CD8-positive, alpha-beta memory T cell (primary cell): ENCODE measurements at regions of chr20 and their contacts with region 1.

Region 1: GRCh38 chr20:50070991-50071888 is 41.7 kb downstream of the UBE2V1 start:
- DNase-seq: peak; percentile 80 to 88 (median 85)
- H3K4me3 ChIP-seq: peak overlapping the region; percentile 22
- H3K4me3 Mint-ChIP-seq: peak overlapping the region; percentile 24 to 85 (median 63)
- H3K27ac ChIP-seq: peak overlapping the region; percentile 29
- H3K27ac Mint-ChIP-seq: peak overlapping the region in 1 of 8 donors; percentile 17
- H3K4me1 ChIP-seq: peaks cover 5% of the 10 kb centered on the region
- H3K4me1 Mint-ChIP-seq: peaks cover 2 to 6% (median 6%) of the 10 kb centered on the region in 3 donors
- H3K27me3 ChIP-seq: no peaks in the 10 kb centered on the region
- H3K27me3 Mint-ChIP-seq: peaks cover 5 to 7% of the 10 kb centered on the region in 2 donors

Region 2: GRCh38 chr20:49843770-49844380 is 227.4 kb before region 1 on chr20:
- CTCF ChIA-PET with region 1: no interaction called
- POLR2A ChIA-PET with region 1: no interaction called
- DNase-seq: no peak
- H3K4me3 ChIP-seq: no peak overlapping the region
- H3K4me3 Mint-ChIP-seq: no peak overlapping the region
- H3K27ac ChIP-seq: no peak overlapping the region
- H3K27ac Mint-ChIP-seq: peak overlapping the region in 7 of 8 donors; percentile 6 to 58 (median 32)
- H3K4me1 ChIP-seq: no peaks in the 10 kb centered on the region
- H3K4me1 Mint-ChIP-seq: peaks cover 0 to 6% (median 2%) of the 10 kb centered on the region in 3 donors
- H3K27me3 ChIP-seq: no peaks in the 10 kb centered on the region
- H3K27me3 Mint-ChIP-seq: no peaks in the 10 kb centered on the region

Region 3: GRCh38 chr20:49901588-49901987 is 169.7 kb before region 1 on chr20:
- CTCF ChIA-PET with region 1: no interaction called
- POLR2A ChIA-PET with region 1: no interaction called
- DNase-seq: peak in 1 of 5 donors; percentile 30
- H3K4me3 ChIP-seq: no peak overlapping the region
- H3K4me3 Mint-ChIP-seq: no peak overlapping the region
- H3K27ac ChIP-seq: no peak overlapping the region
- H3K27ac Mint-ChIP-seq: no peak overlapping the region
- H3K4me1 ChIP-seq: no peaks in the 10 kb centered on the region
- H3K4me1 Mint-ChIP-seq: peaks cover 0 to 5% (median 0%) of the 10 kb centered on the region in 3 donors
- H3K27me3 ChIP-seq: no peaks in the 10 kb centered on the region
- H3K27me3 Mint-ChIP-seq: peaks cover 0 to 1% of the 10 kb centered on the region in 2 donors

Region 4: GRCh38 chr20:49973995-49974394 is 97.2 kb before region 1 on chr20:
- CTCF ChIA-PET with region 1: interaction called, 150 read pairs
- POLR2A ChIA-PET with region 1: no interaction called
- DNase-seq: no peak
- H3K4me3 ChIP-seq: no peak overlapping the region
- H3K4me3 Mint-ChIP-seq: peak overlapping the region in 1 of 7 donors; percentile 72
- H3K27ac ChIP-seq: no peak overlapping the region
- H3K27ac Mint-ChIP-seq: peak overlapping the region in 1 of 8 donors; percentile 68
- H3K4me1 ChIP-seq: peaks cover 4% of the 10 kb centered on the region
- H3K4me1 Mint-ChIP-seq: peaks cover 0 to 5% (median 0%) of the 10 kb centered on the region in 3 donors
- H3K27me3 ChIP-seq: no peaks in the 10 kb centered on the region
- H3K27me3 Mint-ChIP-seq: peaks cover 0 to 4% of the 10 kb centered on the region in 2 donors

Region 5: DNA sequence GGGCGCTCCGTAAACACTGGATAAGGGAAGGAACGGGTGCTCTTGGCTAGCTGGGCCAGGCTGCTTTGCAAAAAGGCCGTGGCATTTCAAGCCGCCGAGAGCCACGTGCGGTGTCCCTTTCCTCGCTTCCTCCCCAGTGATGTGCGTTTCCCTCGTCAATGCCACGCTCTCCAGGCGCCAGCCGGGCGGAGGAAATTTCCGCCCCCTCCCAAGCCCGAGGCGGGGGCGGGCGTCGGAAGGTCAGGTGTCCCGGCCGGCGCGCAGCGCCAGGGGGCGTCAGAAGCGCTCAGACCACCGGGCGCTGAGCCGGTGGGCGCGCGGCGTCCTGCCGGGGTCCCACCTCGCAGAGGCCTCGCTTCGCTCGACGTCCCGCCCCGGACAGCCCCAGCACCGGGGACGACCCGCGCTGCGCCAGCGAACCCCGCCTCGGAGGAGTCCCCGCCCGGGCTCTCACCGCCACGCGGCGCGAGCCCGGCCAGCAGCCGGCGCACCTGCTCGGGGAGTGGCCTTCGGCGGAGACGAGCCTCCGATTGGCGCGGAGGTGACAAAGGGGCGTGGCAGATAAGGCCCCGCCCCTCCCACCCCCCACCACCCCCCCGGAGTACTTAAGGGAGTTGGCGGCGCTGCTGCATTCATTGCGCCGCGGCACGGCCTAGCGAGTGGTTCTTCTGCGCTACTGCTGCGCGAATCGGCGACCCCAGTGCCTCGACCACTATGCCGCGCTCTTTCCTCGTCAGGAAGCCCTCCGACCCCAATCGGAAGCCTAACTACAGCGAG is 88.7 kb before region 1 on chr20 and contains the start of gene SNAI1:
- CTCF ChIA-PET with region 1: interaction called, 150 read pairs
- POLR2A ChIA-PET with region 1: interaction called, 3 read pairs
- DNase-seq: peak; percentile 75 to 92 (median 80)
- H3K4me3 ChIP-seq: peak within 1 kb of the TSS; percentile 67
- H3K4me3 Mint-ChIP-seq: peak within 1 kb of the TSS; percentile 66 to 78 (median 74)
- H3K27ac ChIP-seq: peak within 1 kb of the TSS; percentile 67
- H3K27ac Mint-ChIP-seq: peak within 1 kb of the TSS in 7 of 8 donors; percentile 43 to 97 (median 80)
- H3K4me1 ChIP-seq: peaks cover 24% of the 10 kb centered on the region
- H3K4me1 Mint-ChIP-seq: peaks cover 18 to 39% (median 26%) of the 10 kb centered on the region in 3 donors
- H3K27me3 ChIP-seq: no peaks in the 10 kb centered on the region
- H3K27me3 Mint-ChIP-seq: peaks cover 2 to 3% of the 10 kb centered on the region in 2 donors
- total RNA-seq, gene SNAI1: 0.42 to 0.49 TPM

Region 6: DNA sequence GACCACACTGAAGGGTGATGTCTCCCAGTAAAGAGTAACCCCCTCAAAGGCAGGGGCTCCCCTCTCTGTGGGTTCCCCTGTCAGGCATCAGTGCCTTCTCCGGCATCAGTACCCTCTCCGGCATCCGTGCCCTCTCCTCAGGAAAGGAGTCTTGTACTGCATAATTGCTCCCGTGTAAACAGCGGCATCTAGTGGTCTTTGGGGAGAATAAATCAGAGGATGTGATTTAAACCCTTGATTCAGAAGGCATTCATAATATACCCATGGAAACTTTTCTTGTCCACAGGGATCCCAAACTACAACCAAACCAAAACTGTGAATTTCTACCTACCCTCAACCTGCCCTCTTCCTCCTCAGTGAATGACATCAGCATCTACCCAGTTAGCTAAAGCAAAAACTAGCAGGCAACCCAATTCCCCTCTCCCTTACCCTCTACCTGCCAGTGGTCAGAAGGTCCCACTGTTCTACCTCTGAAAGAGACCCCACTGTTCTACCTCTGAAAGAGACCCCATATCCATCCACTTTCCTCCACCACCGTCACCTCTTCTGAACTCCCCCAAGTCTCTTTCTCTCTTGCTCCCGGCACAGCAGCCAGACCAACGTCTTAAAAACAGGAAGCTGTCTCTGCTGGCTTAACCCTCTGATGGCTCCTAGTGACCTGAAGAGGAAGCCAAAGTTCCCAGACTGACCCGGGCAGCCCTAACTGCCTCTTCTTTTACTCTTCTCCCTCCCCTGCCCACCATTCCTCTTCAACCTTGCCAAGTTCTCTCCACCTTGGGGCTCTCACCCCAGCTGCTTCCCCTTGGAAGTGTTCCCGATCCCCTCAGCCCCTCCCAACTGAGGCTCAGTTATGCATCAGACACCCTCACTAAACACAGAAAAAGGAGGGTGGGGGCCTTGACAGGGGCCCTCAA is 14.5 kb after region 1 on chr20:
- CTCF ChIA-PET with region 1: interaction called, 38 read pairs
- POLR2A ChIA-PET with region 1: no interaction called
- DNase-seq: peak in 3 of 5 donors; percentile 13 to 53 (median 26)
- H3K4me3 ChIP-seq: peak overlapping the region; percentile 44
- H3K4me3 Mint-ChIP-seq: peak overlapping the region; percentile 23 to 92 (median 82)
- H3K27ac ChIP-seq: no peak overlapping the region
- H3K27ac Mint-ChIP-seq: peak overlapping the region; percentile 37 to 93 (median 81)
- H3K4me1 ChIP-seq: peaks cover 15% of the 10 kb centered on the region
- H3K4me1 Mint-ChIP-seq: peaks cover 27 to 49% (median 34%) of the 10 kb centered on the region in 3 donors
- H3K27me3 ChIP-seq: no peaks in the 10 kb centered on the region
- H3K27me3 Mint-ChIP-seq: no peaks in the 10 kb centered on the region

Region 7: GRCh38 chr20:50093240-50093639 is 22.0 kb after region 1 on chr20:
- CTCF ChIA-PET with region 1: interaction called, 10 read pairs
- POLR2A ChIA-PET with region 1: no interaction called
- DNase-seq: no peak
- H3K4me3 ChIP-seq: no peak overlapping the region
- H3K4me3 Mint-ChIP-seq: no peak overlapping the region
- H3K27ac ChIP-seq: no peak overlapping the region
- H3K27ac Mint-ChIP-seq: peak overlapping the region in 1 of 8 donors; percentile 77
- H3K4me1 ChIP-seq: peaks cover 6% of the 10 kb centered on the region
- H3K4me1 Mint-ChIP-seq: peaks cover 36 to 60% (median 50%) of the 10 kb centered on the region in 3 donors
- H3K27me3 ChIP-seq: no peaks in the 10 kb centered on the region
- H3K27me3 Mint-ChIP-seq: no peaks in the 10 kb centered on the region

Region 8: DNA sequence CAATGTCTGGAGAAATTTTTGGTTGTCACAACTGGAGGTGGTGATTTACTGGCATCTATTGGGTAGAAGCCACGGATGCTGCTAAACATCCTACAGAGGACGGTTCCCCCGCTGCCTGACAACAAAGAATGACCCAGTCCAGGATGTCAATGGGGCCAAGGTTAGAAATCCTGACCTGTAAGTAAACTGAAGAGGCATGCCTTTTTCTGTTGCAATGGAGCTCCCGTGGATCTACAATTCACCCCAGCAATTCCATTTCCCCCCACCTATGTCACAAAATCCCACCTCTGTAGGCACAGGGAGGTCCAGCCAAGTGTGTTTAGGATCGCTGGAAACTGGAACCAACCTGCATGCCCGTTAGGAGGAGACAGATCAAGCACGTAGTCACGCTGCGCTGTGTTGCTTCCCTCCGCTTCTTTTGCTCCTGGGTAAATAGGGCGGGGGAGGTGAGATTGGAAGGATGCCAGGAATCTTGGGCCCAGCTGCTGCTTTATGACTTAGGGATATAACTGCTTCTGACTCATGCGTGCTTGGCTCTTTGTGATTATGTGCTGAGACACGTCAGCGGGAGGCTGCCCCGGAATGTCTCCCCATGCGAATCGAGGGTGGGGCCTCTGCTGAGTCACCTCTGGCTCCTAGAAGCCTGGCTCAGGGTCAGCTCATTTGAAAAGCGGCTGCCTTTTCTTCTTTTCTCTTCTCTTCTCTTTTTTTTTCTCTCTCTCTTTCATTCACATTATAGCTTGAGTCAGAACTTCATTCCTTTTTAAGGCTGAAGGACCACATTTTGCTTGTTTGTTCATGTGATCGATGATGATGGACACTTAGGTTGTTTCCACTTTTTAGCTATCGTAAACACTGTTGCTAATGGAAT is 94.7 kb after region 1 on chr20:
- CTCF ChIA-PET with region 1: interaction called, 18 read pairs
- POLR2A ChIA-PET with region 1: no interaction called
- DNase-seq: peak; percentile 22 to 82 (median 32)
- H3K4me3 ChIP-seq: peak overlapping the region; percentile 20
- H3K4me3 Mint-ChIP-seq: peak overlapping the region in 6 of 7 donors; percentile 29 to 53 (median 48)
- H3K27ac ChIP-seq: peak overlapping the region; percentile 70
- H3K27ac Mint-ChIP-seq: peak overlapping the region in 2 of 8 donors; percentile 34 to 84
- H3K4me1 ChIP-seq: peaks cover 4% of the 10 kb centered on the region
- H3K4me1 Mint-ChIP-seq: peaks cover 6 to 13% (median 8%) of the 10 kb centered on the region in 3 donors
- H3K27me3 ChIP-seq: no peaks in the 10 kb centered on the region
- H3K27me3 Mint-ChIP-seq: peaks cover 2 to 8% of the 10 kb centered on the region in 2 donors